GM12878 (cell line): ENCODE measurements at regions of chr5 and their contacts with region 1.

Region 1: DNA sequence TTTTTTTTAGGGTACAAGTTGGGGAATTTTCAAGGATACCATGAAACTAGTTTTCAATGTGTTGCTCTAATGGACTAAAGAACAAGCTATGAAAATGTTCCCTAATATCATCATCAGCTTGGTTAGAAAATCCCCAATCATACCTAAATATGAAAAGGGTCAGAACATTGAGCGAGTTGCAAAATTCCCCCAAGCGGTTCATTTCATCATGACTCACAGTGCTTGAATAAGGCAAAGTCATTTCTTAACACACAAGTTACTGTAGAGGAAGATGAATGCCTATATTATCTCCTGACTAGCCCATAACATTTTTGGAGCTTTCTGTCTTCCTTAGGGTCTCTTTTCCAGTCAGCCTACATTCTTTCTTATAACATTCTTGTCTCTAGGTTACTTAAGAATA is 62.7 kb downstream of the ST8SIA4 start:
- DNase-seq: peak; percentile 81
- ATAC-seq: peak; percentile 84
- H3K4me3 ChIP-seq: no peak overlapping the region
- H3K27ac ChIP-seq: peak overlapping the region; percentile 85
- H3K4me1 ChIP-seq: peaks cover 28% of the 10 kb centered on the region
- H3K27me3 ChIP-seq: no peaks in the 10 kb centered on the region
- CTCF ChIP-seq: 0 out of 6 replicates have a peak, but pooled peaks of 1 of the 3 experiments have one; percentile 9
- EP300 ChIP-seq: peak; percentile 84 to 86; a peak in 3 of 4 replicates
- POLR2A ChIP-seq: no peak
- RAD21 ChIP-seq: peak; percentile 32; the same call in 1 of the 2 replicates

Region 2: DNA sequence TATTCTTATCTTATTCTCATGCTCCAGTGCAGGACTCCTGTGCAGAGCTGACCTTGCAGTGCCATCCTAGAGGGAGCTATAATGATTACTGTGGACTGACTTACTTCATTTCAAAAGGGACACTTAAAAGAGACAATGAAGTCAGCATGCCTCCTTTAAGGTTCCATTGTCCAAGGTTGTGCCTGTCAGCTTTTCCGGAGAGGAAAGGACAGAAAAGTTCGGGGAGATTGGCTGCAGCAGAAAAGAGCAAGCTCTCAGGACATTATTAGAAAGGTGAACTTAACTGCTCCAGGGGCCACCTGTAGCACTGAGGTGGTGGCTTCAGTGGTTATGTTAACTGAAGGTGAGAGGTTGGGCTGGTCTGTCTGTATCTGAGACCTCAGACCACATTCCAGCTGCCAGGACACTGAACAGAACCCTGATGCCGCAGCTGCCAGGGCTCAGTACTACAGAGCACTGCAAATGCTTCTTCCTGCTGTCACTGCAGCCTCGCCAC is 50.2 kb before region 1 on chr5:
- CTCF ChIA-PET with region 1: interaction called, 9 read pairs
- POLR2A ChIA-PET with region 1: no interaction called
- RAD21 ChIA-PET with region 1: interaction called, 9 read pairs
- SMC1A ChIA-PET with region 1: interaction called, 24 read pairs
- in situ Hi-C with region 1: no loop called
- intact Hi-C with region 1: no loop called
- DNase-seq: no peak
- ATAC-seq: peak; percentile 80
- H3K4me3 ChIP-seq: no peak overlapping the region
- H3K27ac ChIP-seq: no peak overlapping the region
- H3K4me1 ChIP-seq: peaks cover 12% of the 10 kb centered on the region
- H3K27me3 ChIP-seq: no peaks in the 10 kb centered on the region
- CTCF ChIP-seq: peak in 1 of 3 experiments; percentile 31; a peak in 2 of 6 replicates
- EP300 ChIP-seq: no peak
- POLR2A ChIP-seq: no peak
- RAD21 ChIP-seq: no peak

Region 3: GRCh38 chr5:100827481-100827889 is 12.9 kb before region 1 on chr5:
- CTCF ChIA-PET with region 1: interaction called, 19 read pairs
- POLR2A ChIA-PET with region 1: interaction called, 33 read pairs
- RAD21 ChIA-PET with region 1: interaction called, 83 read pairs
- SMC1A ChIA-PET with region 1: interaction called, 137 read pairs
- in situ Hi-C with region 1: no loop called
- intact Hi-C with region 1: loop called (anchors 1 kb)
- DNase-seq: no peak
- ATAC-seq: peak; percentile 29
- H3K4me3 ChIP-seq: peak overlapping the region; percentile 44; the same call in 1 of the 2 replicates
- H3K27ac ChIP-seq: peak overlapping the region; percentile 95
- H3K4me1 ChIP-seq: peaks cover 32% of the 10 kb centered on the region
- H3K27me3 ChIP-seq: no peaks in the 10 kb centered on the region
- CTCF ChIP-seq: no peak
- EP300 ChIP-seq: no peak
- POLR2A ChIP-seq: no peak
- RAD21 ChIP-seq: no peak

Region 4: DNA sequence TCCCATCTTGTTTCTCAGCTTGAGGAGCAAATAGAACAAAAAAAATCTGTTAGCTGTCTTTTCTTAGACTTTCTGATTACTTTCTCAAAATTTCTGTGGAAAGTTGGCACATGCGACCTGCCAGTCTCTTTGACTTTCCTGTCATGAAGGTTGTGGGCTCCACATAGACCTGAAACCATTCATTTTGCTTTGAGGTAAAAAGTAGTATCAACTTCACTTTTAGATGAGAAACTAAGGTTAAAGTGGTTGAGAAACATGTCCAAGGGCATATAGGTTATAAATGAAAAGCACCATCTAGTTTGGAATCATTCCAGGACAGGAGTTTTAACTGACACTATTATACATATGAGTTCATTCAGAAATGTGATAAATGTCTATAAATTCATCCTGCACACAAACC is 20.0 kb after region 1 on chr5:
- CTCF ChIA-PET with region 1: interaction called, 9 read pairs
- POLR2A ChIA-PET with region 1: interaction called, 18 read pairs
- RAD21 ChIA-PET with region 1: interaction called, 84 read pairs
- SMC1A ChIA-PET with region 1: interaction called, 147 read pairs
- in situ Hi-C with region 1: no loop called
- intact Hi-C with region 1: loop called (anchors 2 kb)
- DNase-seq: no peak
- ATAC-seq: peak; percentile 63
- H3K4me3 ChIP-seq: no peak overlapping the region
- H3K27ac ChIP-seq: peak overlapping the region; percentile 20
- H3K4me1 ChIP-seq: peaks cover 28% of the 10 kb centered on the region
- H3K27me3 ChIP-seq: no peaks in the 10 kb centered on the region
- CTCF ChIP-seq: no peak
- EP300 ChIP-seq: 0 out of 4 replicates have a peak, but pooled peaks of 1 of the 2 experiments have one; percentile 23
- POLR2A ChIP-seq: no peak
- RAD21 ChIP-seq: no peak

Region 5: DNA sequence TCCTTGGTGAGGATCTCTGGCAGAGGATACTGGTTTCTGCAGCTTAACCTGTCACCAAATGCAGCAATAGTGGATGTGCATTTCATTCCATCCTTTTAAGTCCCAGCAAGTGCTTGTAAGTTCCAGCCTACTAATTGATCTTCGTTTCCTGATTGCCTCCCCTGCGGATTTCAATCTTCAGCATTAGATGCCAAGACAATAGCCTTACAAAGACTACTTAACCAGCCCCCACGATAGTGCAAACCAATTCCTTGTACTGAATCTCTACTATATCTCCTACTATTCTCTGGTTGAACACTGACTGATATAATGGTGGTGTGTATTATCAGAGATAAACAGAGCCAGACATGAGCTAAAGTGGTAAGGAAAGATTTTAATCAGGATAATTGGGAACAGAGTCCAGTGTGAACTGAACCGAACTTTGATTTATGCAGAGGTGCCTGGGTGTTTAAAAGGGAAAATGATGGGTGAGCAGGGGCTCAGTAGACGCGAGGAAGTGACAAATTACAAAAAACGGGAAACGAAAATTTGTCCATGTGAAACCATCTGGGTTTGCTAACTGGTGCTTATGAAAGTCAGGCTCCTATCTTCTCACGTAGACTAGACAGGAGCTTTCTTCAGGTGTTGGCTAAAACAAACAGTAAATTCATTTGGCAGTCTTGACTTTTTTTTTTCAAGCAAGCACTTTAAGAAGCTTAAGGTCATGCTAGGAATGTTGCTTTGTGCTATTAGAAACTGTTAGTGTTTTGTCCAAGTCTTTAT is 169.6 kb after region 1 on chr5:
- CTCF ChIA-PET with region 1: interaction called, 3 read pairs
- POLR2A ChIA-PET with region 1: no interaction called
- RAD21 ChIA-PET with region 1: interaction called, 5 read pairs
- SMC1A ChIA-PET with region 1: interaction called, 11 read pairs
- in situ Hi-C with region 1: no loop called
- intact Hi-C with region 1: no loop called
- DNase-seq: peak; percentile 39
- ATAC-seq: peak; percentile 94
- H3K4me3 ChIP-seq: no peak overlapping the region
- H3K27ac ChIP-seq: peak overlapping the region; percentile 50; the same call in 1 of the 2 replicates
- H3K4me1 ChIP-seq: peaks cover 8% of the 10 kb centered on the region
- H3K27me3 ChIP-seq: no peaks in the 10 kb centered on the region
- CTCF ChIP-seq: no peak
- EP300 ChIP-seq: 0 out of 4 replicates have a peak, but pooled peaks of 1 of the 2 experiments have one; percentile 27
- POLR2A ChIP-seq: no peak
- RAD21 ChIP-seq: no peak